ENCODE measurements at regions of chr10 and their contacts with region 1.

Region 1: DNA sequence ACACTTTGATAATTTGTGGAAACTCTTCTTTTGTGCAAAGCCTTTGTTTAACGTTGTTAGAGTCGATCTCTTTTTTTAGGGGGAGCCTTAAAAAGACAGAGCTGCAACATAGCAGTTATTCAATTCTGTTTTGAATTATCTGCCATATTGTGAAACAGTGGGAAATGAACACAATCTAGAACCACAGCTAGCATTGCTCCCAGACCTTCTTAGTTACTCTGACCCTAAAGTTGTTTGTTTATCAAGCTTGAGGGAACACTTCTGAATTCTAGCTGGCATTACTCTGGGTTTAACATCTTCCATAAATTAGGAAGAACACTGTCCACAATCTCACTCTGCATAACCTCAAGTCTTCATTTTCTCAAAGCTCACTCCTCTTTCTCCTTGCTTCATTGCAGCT is 217.7 kb downstream of the PRKG1 start:
- DNase-seq: no peak
- H3K4me3 ChIP-seq: no peak overlapping the region
- H3K27ac ChIP-seq: peak overlapping the region in 1 of 2 donors; percentile 7
- H3K4me1 ChIP-seq: no peaks in the 10 kb centered on the region
- H3K27me3 ChIP-seq: no peaks in the 10 kb centered on the region
- CTCF ChIP-seq: no peak
- POLR2A ChIP-seq: no peak

Region 2: GRCh38 chr10:51231754-51232153 is 60.2 kb before region 1 on chr10:
- intact Hi-C with region 1: no loop called
- DNase-seq: no peak
- H3K4me3 ChIP-seq: no peak overlapping the region
- H3K27ac ChIP-seq: no peak overlapping the region
- H3K4me1 ChIP-seq: no peaks in the 10 kb centered on the region
- H3K27me3 ChIP-seq: no peaks in the 10 kb centered on the region
- CTCF ChIP-seq: no peak
- POLR2A ChIP-seq: no peak

Region 3: DNA sequence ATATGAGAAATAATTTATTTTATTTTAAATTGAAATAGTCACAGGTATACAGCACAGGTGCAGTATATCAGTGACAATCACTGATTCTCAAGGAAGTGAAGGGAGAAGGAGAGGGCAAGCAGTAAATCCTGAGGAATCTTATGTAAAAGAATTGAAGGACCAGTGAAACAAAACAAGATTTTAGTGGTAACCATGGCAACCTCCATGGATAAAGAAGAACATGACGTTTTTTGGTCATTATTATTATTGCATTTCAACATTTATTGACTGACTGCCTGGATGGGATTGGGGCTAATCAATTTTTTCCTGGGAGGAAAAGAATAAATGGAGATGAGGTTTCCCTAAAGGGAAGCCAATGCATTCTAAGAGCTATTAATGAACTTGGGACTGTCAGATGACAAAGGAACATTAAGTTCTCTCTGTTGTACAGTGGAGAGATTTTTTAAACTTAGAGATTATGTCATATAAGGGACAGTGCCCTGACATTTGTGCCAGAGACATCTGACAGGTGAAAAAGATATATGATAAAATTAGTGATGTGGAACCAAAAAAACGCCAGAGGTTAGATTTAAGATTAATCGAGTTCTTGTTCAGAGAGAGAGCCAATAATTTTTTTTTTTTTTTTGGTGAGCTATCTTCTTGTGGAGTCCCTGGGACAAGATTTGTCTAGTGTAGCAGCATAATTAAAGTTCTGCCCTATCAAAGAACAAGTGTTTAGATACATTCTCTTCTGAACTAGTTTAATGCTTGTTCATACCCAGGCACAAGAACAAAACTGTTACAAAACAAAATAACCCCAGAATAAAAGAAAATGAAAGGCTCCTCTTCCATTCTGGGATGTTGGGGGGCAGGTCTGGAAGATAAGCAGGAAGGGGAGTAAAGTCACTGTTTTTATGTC is 127.5 kb after region 1 on chr10:
- intact Hi-C with region 1: loop called (anchors 5 kb)
- DNase-seq: no peak
- H3K4me3 ChIP-seq: no peak overlapping the region
- H3K27ac ChIP-seq: no peak overlapping the region
- H3K4me1 ChIP-seq: no peaks in the 10 kb centered on the region
- H3K27me3 ChIP-seq: no peaks in the 10 kb centered on the region
- CTCF ChIP-seq: no peak
- POLR2A ChIP-seq: no peak

Region 4: DNA sequence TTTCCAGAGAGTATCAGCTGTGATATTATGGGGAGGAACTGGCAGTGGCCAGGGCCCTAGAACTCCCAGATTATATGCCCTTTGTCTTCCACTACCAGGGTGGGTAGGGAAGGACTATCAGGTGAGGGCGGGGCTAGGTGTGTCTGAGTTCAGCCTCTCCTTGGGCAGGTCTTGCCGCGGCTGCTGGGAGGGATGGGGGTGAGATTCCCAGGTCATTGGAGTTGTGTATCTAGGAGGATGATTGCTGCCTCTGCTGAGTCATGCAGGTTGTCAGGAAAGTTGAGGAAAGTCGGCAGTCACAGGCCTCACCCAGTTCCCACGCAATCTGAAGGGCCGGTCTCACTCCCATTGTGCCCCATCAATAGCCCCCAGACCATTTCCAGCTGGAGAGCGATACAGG is 1207.3 kb after region 1 on chr10:
- intact Hi-C with region 1: no loop called
- DNase-seq: no peak
- H3K4me3 ChIP-seq: no peak overlapping the region
- H3K27ac ChIP-seq: no peak overlapping the region
- H3K4me1 ChIP-seq: no peaks in the 10 kb centered on the region
- H3K27me3 ChIP-seq: no peaks in the 10 kb centered on the region
- CTCF ChIP-seq: no peak
- POLR2A ChIP-seq: no peak

Measured in breast epithelium (tissue), 4 donors.